Heart right ventricle (tissue), 16 donors: ENCODE measurements at regions of chr16 and their contacts with region 1.

Region 1: GRCh38 chr16:77863250-77863649 is 74.9 kb downstream of the VAT1L start:
- DNase-seq: peak; percentile 23 to 49
- ATAC-seq: peak in 7 of 8 donors; percentile 3 to 34 (median 24)
- H3K4me3 ChIP-seq: no peak overlapping the region
- H3K27ac ChIP-seq: peak overlapping the region in 8 of 10 donors; percentile 9 to 91 (median 65)
- H3K4me1 ChIP-seq: peaks cover 0 to 40% (median 8%) of the 10 kb centered on the region in 9 donors
- H3K27me3 ChIP-seq: no peaks in the 10 kb centered on the region
- CTCF ChIP-seq: no peak

Region 2: DNA sequence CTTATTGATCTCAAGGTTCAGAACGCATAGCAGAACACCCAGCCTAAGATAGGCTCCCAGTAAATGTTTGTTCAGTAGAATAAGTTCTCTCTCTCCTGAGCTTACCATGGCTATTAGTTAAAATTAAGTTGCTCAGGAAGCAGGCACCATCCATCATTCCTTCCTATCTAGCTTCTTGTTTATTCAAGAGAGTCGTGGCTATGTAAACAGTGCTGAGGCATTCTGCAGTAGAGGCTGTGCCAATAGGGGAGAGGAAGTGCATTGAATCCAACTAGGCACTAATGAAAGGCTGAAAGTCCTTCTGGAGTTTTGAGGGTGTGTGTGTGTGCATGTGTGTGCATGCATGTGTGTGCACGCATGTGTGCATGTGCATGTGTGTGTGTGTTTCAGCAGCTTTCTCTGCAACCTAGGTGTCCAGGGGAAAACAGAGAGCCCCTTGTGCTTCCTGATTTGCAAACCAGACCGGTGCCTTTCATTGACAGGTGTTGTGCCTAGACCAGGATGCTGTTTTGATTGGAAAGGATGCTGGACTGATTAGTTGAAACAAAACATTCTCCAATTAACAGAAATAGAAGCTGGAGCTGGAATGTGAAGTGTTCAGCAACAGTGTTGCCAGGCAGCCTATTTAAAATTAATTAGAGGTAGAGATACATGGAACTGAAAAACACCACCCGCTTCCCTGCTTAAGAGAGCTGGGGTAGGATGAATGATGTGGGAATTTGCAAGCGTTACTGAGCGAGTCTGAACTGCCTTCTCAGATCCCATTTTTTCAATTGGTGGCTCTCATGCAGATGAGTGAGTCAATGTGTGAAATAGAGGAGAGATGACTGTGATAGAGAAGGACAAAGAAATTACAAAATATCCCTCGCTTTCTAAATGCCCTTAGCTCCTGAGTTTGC is 55.8 kb after region 1 on chr16:
- intact Hi-C with region 1: loop called in 1 of 10 experiments (anchors 5 kb)
- DNase-seq: no peak
- ATAC-seq: peak; percentile 21 to 55 (median 37)
- H3K4me3 ChIP-seq: no peak overlapping the region
- H3K27ac ChIP-seq: peak overlapping the region in 4 of 10 donors; percentile 30 to 57 (median 37)
- H3K4me1 ChIP-seq: peaks cover 0 to 32% (median 12%) of the 10 kb centered on the region in 9 donors
- H3K27me3 ChIP-seq: peaks cover 0 to 7% (median 0%) of the 10 kb centered on the region in 7 donors
- CTCF ChIP-seq: no peak